ENCODE measurements at regions of chr1 and their contacts with region 1.

Region 1: DNA sequence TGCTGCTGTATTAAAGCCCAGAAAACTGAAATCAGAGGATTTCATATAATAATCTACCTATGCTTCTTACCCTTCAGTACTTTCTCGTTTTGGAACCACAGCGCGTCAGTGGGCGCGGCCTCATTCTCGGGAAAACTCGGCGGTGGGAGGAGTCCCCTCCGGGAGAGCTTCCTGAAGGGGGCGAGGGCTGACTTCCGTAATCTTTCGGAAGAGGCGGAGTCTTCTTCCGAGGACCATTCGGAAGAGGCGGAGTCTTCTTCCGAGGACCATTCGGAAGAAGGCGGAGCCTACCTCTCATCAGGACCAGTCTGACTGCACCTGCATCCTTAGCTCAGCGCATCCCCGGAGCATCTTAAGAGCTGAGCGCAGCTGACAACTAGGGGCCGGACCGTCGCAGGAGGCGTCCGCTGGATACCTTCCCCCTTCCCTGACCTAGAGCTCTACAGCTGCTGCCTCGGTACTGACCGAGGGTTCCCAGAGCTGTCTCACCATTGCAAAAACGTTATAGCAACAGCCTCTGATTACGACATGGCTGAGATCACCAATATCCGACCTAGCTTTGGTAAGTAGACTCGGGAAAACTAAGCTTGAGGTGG is at the start of gene SYT11:
- DNase-seq: peak; percentile 78 to 93 (median 90)
- ATAC-seq: peak; percentile 90
- H3K4me3 ChIP-seq: peak within 1 kb of the TSS; percentile 62
- H3K4me3 Mint-ChIP-seq: peak within 1 kb of the TSS; percentile 75 to 95 (median 92)
- H3K27ac ChIP-seq: peak within 1 kb of the TSS; percentile 72
- H3K27ac Mint-ChIP-seq: peak within 1 kb of the TSS; percentile 64 to 97 (median 86)
- H3K4me1 ChIP-seq: peaks cover 17 to 25% of the 10 kb centered on the region in 2 donors
- H3K4me1 Mint-ChIP-seq: peaks cover 0 to 51% (median 39%) of the 10 kb centered on the region in 7 donors
- H3K27me3 ChIP-seq: no peaks in the 10 kb centered on the region
- H3K27me3 Mint-ChIP-seq: peaks cover 0 to 24% (median 11%) of the 10 kb centered on the region in 5 donors
- total RNA-seq, gene SYT11: 1.4 to 22.9 (median 2.7) TPM

Region 2: GRCh38 chr1:153958111-153958960 is 1901.0 kb before region 1 on chr1 and contains the start of gene CRTC2:
- CTCF ChIA-PET with region 1: no interaction called
- POLR2A ChIA-PET with region 1: no interaction called
- intact Hi-C with region 1: loop called in 1 of 2 experiments (anchors 5 kb)
- DNase-seq: peak; percentile 86 to 99 (median 96)
- ATAC-seq: peak; percentile 94
- H3K4me3 ChIP-seq: peak within 1 kb of the TSS; percentile 74
- H3K4me3 Mint-ChIP-seq: peak within 1 kb of the TSS; percentile 91 to 100 (median 97)
- H3K27ac ChIP-seq: peak within 1 kb of the TSS; percentile 92
- H3K27ac Mint-ChIP-seq: peak within 1 kb of the TSS; percentile 89 to 98 (median 94)
- H3K4me1 ChIP-seq: peaks cover 36% of the 10 kb centered on the region in 2 donors
- H3K4me1 Mint-ChIP-seq: peaks cover 34 to 71% (median 67%) of the 10 kb centered on the region in 7 donors
- H3K27me3 ChIP-seq: no peaks in the 10 kb centered on the region
- H3K27me3 Mint-ChIP-seq: no peaks in the 10 kb centered on the region
- total RNA-seq, gene CRTC2: 86.1 to 157 (median 119) TPM

Region 3: DNA sequence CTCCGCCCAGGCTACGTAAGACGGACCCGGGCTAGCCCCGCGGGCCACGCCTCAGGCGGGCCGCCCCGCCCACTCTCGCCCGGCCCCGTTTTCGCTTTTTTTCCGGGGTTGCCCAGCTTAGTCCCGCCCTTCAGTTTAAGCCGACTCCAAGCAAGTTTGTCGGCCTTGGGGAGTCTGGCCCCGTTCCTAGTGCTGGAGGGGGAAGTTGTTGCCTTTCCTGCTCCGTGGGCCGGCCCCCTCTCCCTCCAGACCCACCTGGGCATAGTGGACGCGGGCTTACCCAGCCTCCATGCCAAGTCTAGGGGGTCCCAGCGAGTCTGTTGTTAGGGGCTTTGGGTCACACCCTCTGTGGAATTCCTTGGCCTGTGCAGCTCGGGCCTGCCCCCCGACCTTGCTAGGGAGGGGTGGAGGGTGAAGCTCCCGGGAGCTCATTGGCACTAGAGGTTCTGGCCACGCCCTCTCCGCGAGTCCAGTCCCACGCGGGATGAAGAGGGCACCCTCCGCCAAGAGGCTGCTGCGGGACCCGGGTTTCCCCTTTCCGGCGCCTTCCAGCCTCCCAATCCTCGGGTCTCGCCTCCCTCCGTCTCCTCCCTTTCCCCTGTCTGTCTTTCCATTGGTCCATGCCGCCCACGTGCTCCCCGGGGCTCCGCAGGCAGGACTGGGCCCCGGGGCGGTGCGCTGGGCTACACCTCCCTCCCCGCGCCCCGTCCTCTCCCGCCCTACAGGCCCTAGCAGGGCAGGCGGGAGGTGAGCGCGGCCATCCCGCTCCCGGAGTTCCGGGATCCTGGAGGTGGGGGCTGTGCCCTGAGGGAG is 535.3 kb before region 1 on chr1:
- CTCF ChIA-PET with region 1: no interaction called
- POLR2A ChIA-PET with region 1: no interaction called
- intact Hi-C with region 1: loop called in 1 of 2 experiments (anchors 1 kb)
- DNase-seq: peak; percentile 75 to 95 (median 80)
- ATAC-seq: peak; percentile 86
- H3K4me3 ChIP-seq: peak overlapping the region; percentile 100
- H3K4me3 Mint-ChIP-seq: peak overlapping the region; percentile 80 to 91 (median 89)
- H3K27ac ChIP-seq: peak overlapping the region; percentile 90
- H3K27ac Mint-ChIP-seq: peak overlapping the region; percentile 44 to 86 (median 73)
- H3K4me1 ChIP-seq: peaks cover 0 to 12% of the 10 kb centered on the region in 2 donors
- H3K4me1 Mint-ChIP-seq: peaks cover 24 to 38% (median 31%) of the 10 kb centered on the region in 7 donors
- H3K27me3 ChIP-seq: no peaks in the 10 kb centered on the region
- H3K27me3 Mint-ChIP-seq: no peaks in the 10 kb centered on the region

Region 4: GRCh38 chr1:155729031-155729898 is 130.1 kb before region 1 on chr1:
- CTCF ChIA-PET with region 1: no interaction called
- POLR2A ChIA-PET with region 1: no interaction called
- intact Hi-C with region 1: no loop called
- DNase-seq: peak in 6 of 9 donors; percentile 7 to 43 (median 28)
- ATAC-seq: peak; percentile 57
- H3K4me3 ChIP-seq: no peak overlapping the region
- H3K4me3 Mint-ChIP-seq: no peak overlapping the region
- H3K27ac ChIP-seq: no peak overlapping the region
- H3K27ac Mint-ChIP-seq: peak overlapping the region in 5 of 9 donors; percentile 10 to 67 (median 29)
- H3K4me1 ChIP-seq: no peaks in the 10 kb centered on the region
- H3K4me1 Mint-ChIP-seq: peaks cover 0 to 7% (median 0%) of the 10 kb centered on the region in 7 donors
- H3K27me3 ChIP-seq: no peaks in the 10 kb centered on the region
- H3K27me3 Mint-ChIP-seq: no peaks in the 10 kb centered on the region

Region 5: GRCh38 chr1:155893389-155894142 is 34.2 kb after region 1 on chr1:
- CTCF ChIA-PET with region 1: no interaction called
- POLR2A ChIA-PET with region 1: interaction called, 6 read pairs
- intact Hi-C with region 1: loop called in 1 of 2 experiments (anchors 1 kb)
- DNase-seq: peak in 7 of 9 donors; percentile 38 to 61 (median 46)
- ATAC-seq: peak; percentile 88
- H3K4me3 ChIP-seq: no peak overlapping the region
- H3K4me3 Mint-ChIP-seq: peak overlapping the region in 7 of 10 donors; percentile 11 to 59 (median 29)
- H3K27ac ChIP-seq: peak overlapping the region; percentile 56
- H3K27ac Mint-ChIP-seq: peak overlapping the region; percentile 72 to 91 (median 85)
- H3K4me1 ChIP-seq: peaks cover 4 to 13% of the 10 kb centered on the region in 2 donors
- H3K4me1 Mint-ChIP-seq: peaks cover 9 to 19% (median 16%) of the 10 kb centered on the region in 7 donors
- H3K27me3 ChIP-seq: no peaks in the 10 kb centered on the region
- H3K27me3 Mint-ChIP-seq: no peaks in the 10 kb centered on the region

Region 6: DNA sequence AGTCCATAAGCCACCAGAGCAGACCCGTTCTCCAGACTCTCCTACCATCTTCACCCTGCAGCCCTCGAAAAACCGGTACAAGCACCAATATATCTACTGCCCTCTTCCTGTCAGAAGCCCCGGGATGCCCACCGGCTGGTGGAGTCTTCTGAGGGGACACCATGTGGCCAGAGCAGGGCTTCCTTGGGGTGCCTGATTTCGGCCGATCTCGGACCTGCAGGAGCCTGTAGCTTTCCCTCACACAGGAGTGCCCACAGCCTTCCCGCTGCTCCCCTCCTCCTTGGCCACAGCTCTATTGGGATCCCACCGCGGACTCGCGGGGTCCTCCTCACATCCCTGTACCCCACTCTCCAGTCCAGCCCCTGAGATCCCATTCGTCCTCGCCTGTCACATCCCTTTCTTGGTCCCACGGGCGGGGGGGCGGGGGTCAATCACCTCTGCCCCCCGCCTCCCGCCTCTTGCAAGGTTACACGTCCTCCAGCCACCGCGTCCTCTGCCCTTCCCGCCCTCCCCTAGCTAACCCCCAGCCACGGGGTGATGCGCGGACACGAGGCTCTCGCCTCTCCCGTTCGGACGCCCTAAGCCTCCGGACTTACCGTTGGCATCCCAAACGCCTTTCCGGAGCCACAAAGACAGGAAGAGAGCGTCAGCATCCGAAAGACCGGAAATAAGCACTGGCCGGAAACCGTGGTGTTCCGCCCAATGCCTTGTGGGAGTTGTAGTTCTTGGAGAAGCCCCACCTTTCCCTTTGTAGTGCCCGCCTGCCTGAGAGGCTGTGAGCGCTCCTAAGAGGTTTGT is 161.2 kb after region 1 on chr1 and contains the start of gene SSR2:
- CTCF ChIA-PET with region 1: no interaction called
- POLR2A ChIA-PET with region 1: no interaction called
- intact Hi-C with region 1: loop called in 1 of 2 experiments (anchors 2 kb)
- DNase-seq: peak; percentile 44 to 91 (median 84)
- ATAC-seq: peak; percentile 99
- H3K4me3 ChIP-seq: peak within 1 kb of the TSS; percentile 87
- H3K4me3 Mint-ChIP-seq: peak within 1 kb of the TSS; percentile 87 to 99 (median 96)
- H3K27ac ChIP-seq: peak within 1 kb of the TSS; percentile 74
- H3K27ac Mint-ChIP-seq: peak within 1 kb of the TSS; percentile 89 to 99 (median 95)
- H3K4me1 ChIP-seq: peaks cover 4 to 9% of the 10 kb centered on the region in 2 donors
- H3K4me1 Mint-ChIP-seq: peaks cover 20 to 47% (median 41%) of the 10 kb centered on the region in 7 donors
- H3K27me3 ChIP-seq: no peaks in the 10 kb centered on the region
- H3K27me3 Mint-ChIP-seq: peaks cover 0 to 12% (median 0%) of the 10 kb centered on the region in 5 donors
- total RNA-seq, gene SSR2: 207 to 278 (median 256) TPM

Region 7: GRCh38 chr1:156456622-156457465 is 597.5 kb after region 1 on chr1:
- CTCF ChIA-PET with region 1: no interaction called
- POLR2A ChIA-PET with region 1: no interaction called
- intact Hi-C with region 1: loop called in 1 of 2 experiments (anchors 10 kb)
- DNase-seq: peak; percentile 88 to 99 (median 96)
- ATAC-seq: peak; percentile 91
- H3K4me3 ChIP-seq: peak overlapping the region; percentile 87
- H3K4me3 Mint-ChIP-seq: peak overlapping the region; percentile 91 to 97 (median 94)
- H3K27ac ChIP-seq: peak overlapping the region; percentile 97
- H3K27ac Mint-ChIP-seq: peak overlapping the region; percentile 96 to 100 (median 99)
- H3K4me1 ChIP-seq: peaks cover 4 to 6% of the 10 kb centered on the region in 2 donors
- H3K4me1 Mint-ChIP-seq: peaks cover 4 to 23% (median 11%) of the 10 kb centered on the region in 7 donors
- H3K27me3 ChIP-seq: no peaks in the 10 kb centered on the region
- H3K27me3 Mint-ChIP-seq: peaks cover 0 to 10% (median 0%) of the 10 kb centered on the region in 5 donors

Region 8: GRCh38 chr1:156892190-156893047 is 1033.1 kb after region 1 on chr1:
- CTCF ChIA-PET with region 1: no interaction called
- POLR2A ChIA-PET with region 1: no interaction called
- intact Hi-C with region 1: no loop called
- DNase-seq: peak; percentile 67 to 91 (median 79)
- ATAC-seq: peak; percentile 94
- H3K4me3 ChIP-seq: peak overlapping the region; percentile 41
- H3K4me3 Mint-ChIP-seq: peak overlapping the region; percentile 68 to 84 (median 75)
- H3K27ac ChIP-seq: no peak overlapping the region
- H3K27ac Mint-ChIP-seq: no peak overlapping the region
- H3K4me1 ChIP-seq: peaks cover 0 to 8% of the 10 kb centered on the region in 2 donors
- H3K4me1 Mint-ChIP-seq: peaks cover 8 to 25% (median 18%) of the 10 kb centered on the region in 7 donors
- H3K27me3 ChIP-seq: peaks cover 8 to 11% of the 10 kb centered on the region in 2 donors
- H3K27me3 Mint-ChIP-seq: peaks cover 21 to 51% (median 43%) of the 10 kb centered on the region in 5 donors